GM10248 (cell line): ENCODE measurements at regions of chr20 and their contacts with region 1.

Region 1: DNA sequence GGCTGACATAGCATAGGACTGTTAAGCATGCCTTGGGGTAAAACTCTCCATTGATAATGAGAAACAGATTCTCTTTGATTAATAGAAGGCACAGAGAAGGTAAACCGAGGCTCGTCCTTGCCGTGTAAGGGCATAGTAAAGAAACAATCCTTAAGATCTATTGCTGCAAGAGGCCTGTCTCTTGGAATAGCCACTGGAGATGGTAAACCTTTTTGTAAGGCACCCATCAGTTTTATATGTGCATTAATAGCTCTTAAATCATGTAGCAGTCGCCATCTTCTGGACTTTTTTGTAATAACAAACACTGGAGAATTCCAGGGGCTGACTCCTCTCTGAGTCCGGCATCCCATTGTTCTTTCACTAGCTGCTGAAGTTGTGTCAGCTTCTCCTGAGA is 8.4 kb upstream of the ABHD12 start:
- DNase-seq: peak; percentile 40
- CTCF ChIP-seq: peak; percentile 60

Region 2: DNA sequence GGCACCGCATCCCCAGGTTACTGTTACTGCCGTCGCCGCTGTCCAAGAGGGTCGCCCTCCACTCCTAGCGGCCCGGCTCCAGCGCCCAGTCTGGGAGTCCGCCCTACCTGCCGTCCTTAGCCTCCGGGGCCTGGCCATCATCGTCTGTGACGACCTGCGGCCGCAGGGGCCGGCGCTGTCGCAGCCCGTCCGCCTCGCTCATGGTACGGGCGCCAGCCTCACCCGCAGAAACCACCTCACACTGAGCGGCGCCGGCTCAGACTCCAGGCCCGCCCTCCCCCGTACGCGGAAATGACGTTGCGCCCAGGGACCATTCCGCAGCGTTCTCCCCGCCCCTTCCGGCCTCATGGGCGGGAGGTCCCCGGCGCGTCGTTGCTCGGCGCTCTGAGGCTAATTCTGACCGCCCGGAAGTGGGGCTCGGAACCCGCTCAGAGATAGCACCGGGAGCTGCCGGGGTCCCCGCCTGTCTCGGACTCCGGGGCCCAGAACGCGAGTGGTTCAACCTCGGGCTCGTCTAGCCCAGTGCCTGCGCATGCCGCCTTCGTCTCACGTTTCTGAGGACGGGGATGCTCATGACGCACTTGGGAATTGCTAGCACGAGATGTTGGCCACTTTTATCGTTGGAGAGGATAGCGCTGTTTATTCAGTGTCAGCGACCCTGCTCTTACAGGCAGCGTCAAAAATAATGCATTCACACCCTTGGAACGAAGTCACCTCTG is 406.4 kb before region 1 on chr20 and contains the start of gene APMAP:
- CTCF ChIA-PET with region 1: interaction called, 15 read pairs
- POLR2A ChIA-PET with region 1: no interaction called
- DNase-seq: peak; percentile 98
- CTCF ChIP-seq: no peak

Region 3: DNA sequence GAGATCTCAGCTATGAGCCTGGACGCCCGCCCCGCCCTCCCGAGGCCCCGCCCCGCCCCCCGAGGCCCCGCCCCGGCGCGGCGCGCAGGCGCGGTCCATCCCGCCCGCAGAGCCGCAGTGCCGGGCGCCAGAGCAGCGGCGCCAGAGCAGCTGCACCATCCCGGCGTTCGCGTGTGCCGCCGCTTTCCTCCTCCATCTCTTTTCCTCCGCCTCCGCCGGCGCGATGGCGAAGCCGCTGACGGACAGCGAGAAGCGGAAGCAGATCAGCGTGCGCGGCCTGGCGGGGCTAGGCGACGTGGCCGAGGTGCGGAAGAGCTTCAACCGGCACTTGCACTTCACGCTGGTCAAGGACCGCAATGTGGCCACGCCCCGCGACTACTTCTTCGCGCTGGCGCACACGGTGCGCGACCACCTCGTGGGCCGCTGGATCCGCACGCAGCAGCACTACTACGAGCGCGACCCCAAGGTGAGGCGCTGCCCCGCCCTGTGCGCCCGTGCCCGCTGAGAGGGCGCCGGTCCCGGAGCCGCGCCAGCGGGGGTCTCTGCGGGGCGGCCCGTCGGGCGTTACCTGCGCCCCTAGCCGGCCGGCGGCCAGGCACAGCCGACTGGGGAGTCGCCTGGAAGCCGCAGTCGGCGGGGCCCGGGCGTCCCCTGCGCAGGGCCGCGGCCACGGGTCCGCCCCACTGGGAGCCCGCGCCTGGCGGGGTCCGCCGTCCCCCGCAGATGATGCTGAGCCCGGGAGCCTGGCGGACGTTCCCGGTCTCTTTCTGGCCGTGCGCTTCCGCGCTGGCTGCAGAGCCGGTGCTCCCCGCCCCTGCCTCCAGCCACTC is 150.9 kb before region 1 on chr20 and contains the start of gene PYGB:
- CTCF ChIA-PET with region 1: interaction called, 21 read pairs
- POLR2A ChIA-PET with region 1: no interaction called
- DNase-seq: peak; percentile 95
- CTCF ChIP-seq: peak; percentile 2

Region 4: DNA sequence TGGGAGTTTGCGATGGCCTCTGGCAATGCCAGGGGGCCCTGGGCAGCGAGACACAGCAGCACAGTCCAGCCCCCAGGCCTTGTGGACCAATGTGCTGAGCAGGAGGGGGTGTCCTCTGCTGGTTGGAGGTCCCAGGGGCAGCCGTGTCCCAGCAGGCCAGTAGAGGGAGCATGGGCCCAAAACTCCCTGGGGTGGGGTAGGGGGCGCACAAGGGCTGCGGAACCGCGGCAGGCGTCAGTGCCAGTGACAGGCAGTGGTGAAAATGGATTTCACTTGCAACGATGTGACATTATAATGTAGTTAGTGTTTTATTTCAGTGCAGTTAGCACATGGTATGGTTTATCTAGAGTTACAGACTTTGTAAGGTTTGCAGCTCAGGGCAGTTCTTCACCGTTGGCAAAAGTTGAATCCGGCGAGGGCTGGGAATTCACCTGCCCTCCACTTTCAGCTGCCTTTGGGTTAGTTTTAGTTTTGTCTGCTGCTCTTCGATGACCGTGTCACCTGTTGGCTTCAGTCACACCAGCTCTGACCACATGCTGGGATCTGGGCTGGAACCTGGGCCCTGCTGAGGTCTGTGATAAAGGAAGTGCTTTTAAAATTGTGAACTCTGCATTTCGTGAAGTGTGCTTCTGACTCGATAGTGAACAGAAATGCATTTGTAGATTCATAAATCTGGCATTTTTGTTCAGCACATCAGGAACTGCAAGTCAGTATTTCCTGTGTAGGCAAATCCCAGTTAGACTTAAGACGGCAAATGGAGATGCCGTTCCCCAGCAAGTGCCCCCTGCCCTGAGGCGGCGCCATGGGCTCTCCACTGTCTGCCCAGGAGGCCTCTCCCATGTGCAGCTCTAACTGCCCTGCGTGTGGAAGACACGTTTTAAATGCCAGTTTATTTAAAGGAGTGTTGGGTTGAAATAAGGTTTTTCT is 104.3 kb before region 1 on chr20:
- CTCF ChIA-PET with region 1: interaction called, 37 read pairs
- POLR2A ChIA-PET with region 1: no interaction called
- DNase-seq: peak; percentile 78
- CTCF ChIP-seq: peak; percentile 84

Region 5: GRCh38 chr20:25310268-25310920 is 88.6 kb before region 1 on chr20:
- CTCF ChIA-PET with region 1: interaction called, 30 read pairs
- POLR2A ChIA-PET with region 1: no interaction called
- DNase-seq: peak; percentile 82
- CTCF ChIP-seq: peak; percentile 72